Ascending aorta (tissue), 2 donors: ENCODE measurements at regions of chr4 and their contacts with region 1.

Region 1: DNA sequence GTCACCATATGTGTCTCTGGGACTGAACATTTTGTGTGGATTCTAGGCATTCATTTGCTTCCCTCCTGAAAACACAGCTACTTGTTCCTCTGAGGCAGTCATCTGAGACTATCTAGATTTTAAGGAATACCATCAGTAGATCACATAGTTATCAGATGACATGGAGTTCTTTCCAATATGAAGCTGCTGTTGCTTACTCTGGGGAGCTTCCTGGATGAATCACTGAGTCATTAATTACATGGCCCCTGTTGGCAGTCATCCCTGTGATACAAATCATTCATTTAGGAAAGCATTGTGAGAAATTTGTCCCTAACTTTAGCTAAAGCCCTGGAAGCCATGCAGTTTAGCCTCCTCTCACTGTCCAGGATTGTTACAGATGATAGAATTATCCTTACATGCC is 98.2 kb upstream of the ARSJ start:
- DNase-seq: no peak
- H3K4me3 ChIP-seq: no peak overlapping the region
- H3K27ac ChIP-seq: no peak overlapping the region
- H3K4me1 ChIP-seq: no peaks in the 10 kb centered on the region
- H3K27me3 ChIP-seq: no peaks in the 10 kb centered on the region
- CTCF ChIP-seq: no peak

Region 2: GRCh38 chr4:113383111-113383785 is 694.4 kb before region 1 on chr4:
- intact Hi-C with region 1: loop called (anchors 10 kb)
- DNase-seq: no peak
- H3K4me3 ChIP-seq: no peak overlapping the region
- H3K27ac ChIP-seq: peak overlapping the region; percentile 56 to 62
- H3K4me1 ChIP-seq: peaks cover 9 to 22% of the 10 kb centered on the region in 2 donors
- H3K27me3 ChIP-seq: no peaks in the 10 kb centered on the region
- CTCF ChIP-seq: no peak

Region 3: GRCh38 chr4:113781439-113782040 is 296.1 kb before region 1 on chr4:
- intact Hi-C with region 1: loop called (anchors 5 kb)
- DNase-seq: no peak
- H3K4me3 ChIP-seq: no peak overlapping the region
- H3K27ac ChIP-seq: no peak overlapping the region
- H3K4me1 ChIP-seq: peaks cover 4% of the 10 kb centered on the region in 2 donors
- H3K27me3 ChIP-seq: no peaks in the 10 kb centered on the region
- CTCF ChIP-seq: peak; percentile 28 to 65 (median 59)

Region 4: GRCh38 chr4:113952452-113953029 is 125.1 kb before region 1 on chr4:
- intact Hi-C with region 1: loop called (anchors 5 kb)
- DNase-seq: no peak
- H3K4me3 ChIP-seq: no peak overlapping the region
- H3K27ac ChIP-seq: no peak overlapping the region
- H3K4me1 ChIP-seq: peaks cover 0 to 7% of the 10 kb centered on the region in 2 donors
- H3K27me3 ChIP-seq: no peaks in the 10 kb centered on the region
- CTCF ChIP-seq: peak; percentile 49 to 71 (median 68)